A673 (cell line): ENCODE measurements at regions of chr20 and their contacts with region 1.

Region 1: GRCh38 chr20:31661625-31662371 is 24.1 kb downstream of the COX4I2 start:
- DNase-seq: peak; percentile 81
- H3K4me3 ChIP-seq: peak overlapping the region; percentile 44
- H3K27ac ChIP-seq: peak overlapping the region; percentile 29
- H3K4me1 ChIP-seq: peaks cover 10% of the 10 kb centered on the region
- H3K27me3 ChIP-seq: no peaks in the 10 kb centered on the region
- CTCF ChIP-seq: peak; percentile 80

Region 2: DNA sequence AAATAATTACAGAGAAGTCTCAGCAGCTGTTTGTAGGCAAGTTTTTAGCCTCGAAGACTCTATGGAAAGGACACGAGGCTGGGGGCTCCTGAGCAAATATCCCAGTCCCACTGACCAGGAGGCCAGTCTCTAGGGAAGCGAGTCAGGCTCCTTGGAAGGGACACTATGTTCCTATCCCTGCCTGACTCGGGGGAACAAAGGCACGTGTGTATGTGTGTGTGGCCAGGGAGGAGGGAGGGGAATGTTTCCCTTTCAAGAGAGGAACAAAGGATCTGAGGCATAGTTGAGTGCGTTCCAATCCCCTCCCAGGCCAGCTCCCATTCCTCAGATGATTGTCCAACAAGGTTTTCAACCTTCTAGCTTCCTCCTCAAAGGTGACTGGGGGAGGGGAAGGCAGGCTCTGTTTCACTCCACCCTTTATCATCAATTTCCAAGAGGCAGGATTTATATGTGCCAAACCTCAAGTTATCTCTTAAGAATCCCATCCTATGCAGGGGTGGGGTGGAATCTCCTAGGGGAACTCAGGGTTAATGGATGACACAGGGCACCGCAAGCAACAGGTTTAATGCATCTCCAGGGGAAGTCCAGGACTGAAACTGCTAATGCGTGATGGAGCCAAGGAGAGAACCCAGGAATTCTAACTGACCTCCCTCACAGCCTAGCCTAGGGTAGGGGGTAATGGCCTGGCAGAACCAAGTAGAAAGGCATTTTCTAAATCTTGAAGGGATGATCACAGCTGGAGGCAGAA is 50.9 kb after region 1 on chr20:
- CTCF ChIA-PET with region 1: interaction called, 5 read pairs
- POLR2A ChIA-PET with region 1: no interaction called
- intact Hi-C with region 1: loop called (anchors 2 kb)
- DNase-seq: peak; percentile 74
- H3K4me3 ChIP-seq: peak overlapping the region; percentile 28
- H3K27ac ChIP-seq: peak overlapping the region; percentile 95
- H3K4me1 ChIP-seq: peaks cover 64% of the 10 kb centered on the region
- H3K27me3 ChIP-seq: no peaks in the 10 kb centered on the region
- CTCF ChIP-seq: no peak

Region 3: GRCh38 chr20:31968291-31969126 is 306.7 kb after region 1 on chr20:
- CTCF ChIA-PET with region 1: no interaction called
- POLR2A ChIA-PET with region 1: no interaction called
- intact Hi-C with region 1: no loop called
- DNase-seq: peak; percentile 79
- H3K4me3 ChIP-seq: no peak overlapping the region
- H3K27ac ChIP-seq: no peak overlapping the region
- H3K4me1 ChIP-seq: no peaks in the 10 kb centered on the region
- H3K27me3 ChIP-seq: peaks cover 69% of the 10 kb centered on the region
- CTCF ChIP-seq: no peak